CD4-positive, alpha-beta T cell (primary cell): ENCODE measurements at regions of chr3 and their contacts with region 1.

Region 1: DNA sequence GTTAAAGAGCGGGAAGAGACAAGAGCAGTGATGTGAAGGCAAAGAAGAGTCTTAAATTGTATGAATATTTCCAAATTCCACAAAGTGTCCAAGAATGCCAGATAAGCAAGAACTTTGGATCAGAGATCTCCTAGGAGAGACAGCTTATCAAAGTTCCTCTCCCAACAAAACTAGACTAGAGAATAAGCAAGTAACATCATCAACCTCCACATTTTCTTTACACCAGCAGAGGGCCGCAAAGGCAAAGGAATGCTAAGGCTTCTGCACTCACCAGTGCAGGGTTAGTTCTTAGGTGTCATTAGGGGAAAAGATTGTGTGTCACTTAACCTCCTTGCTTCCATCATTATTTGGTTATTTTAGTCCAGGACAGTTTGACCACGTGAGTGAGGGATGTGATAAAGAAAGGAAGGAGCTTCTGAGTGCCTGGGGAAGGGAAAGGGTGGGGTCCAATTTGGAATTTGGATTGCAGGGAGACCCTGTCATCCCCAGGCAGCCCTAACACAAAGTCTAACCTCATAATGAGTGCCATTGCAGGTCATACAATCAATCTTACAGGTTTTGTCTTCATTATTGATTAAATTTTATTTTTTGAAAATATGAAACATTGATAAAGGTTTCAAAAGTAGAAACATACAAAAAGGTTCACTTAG is 7.5 kb upstream of the CMTM6 start:
- DNase-seq: peak; percentile 40 to 81 (median 58)
- ATAC-seq: peak; percentile 92
- H3K4me3 ChIP-seq: no peak overlapping the region
- H3K4me3 Mint-ChIP-seq: no peak overlapping the region
- H3K27ac ChIP-seq: no peak overlapping the region
- H3K27ac Mint-ChIP-seq: no peak overlapping the region
- H3K4me1 ChIP-seq: no peaks in the 10 kb centered on the region
- H3K4me1 Mint-ChIP-seq: no peaks in the 10 kb centered on the region
- H3K27me3 ChIP-seq: no peaks in the 10 kb centered on the region
- H3K27me3 Mint-ChIP-seq: no peaks in the 10 kb centered on the region
- CTCF ChIP-seq: peak; percentile 79

Region 2: DNA sequence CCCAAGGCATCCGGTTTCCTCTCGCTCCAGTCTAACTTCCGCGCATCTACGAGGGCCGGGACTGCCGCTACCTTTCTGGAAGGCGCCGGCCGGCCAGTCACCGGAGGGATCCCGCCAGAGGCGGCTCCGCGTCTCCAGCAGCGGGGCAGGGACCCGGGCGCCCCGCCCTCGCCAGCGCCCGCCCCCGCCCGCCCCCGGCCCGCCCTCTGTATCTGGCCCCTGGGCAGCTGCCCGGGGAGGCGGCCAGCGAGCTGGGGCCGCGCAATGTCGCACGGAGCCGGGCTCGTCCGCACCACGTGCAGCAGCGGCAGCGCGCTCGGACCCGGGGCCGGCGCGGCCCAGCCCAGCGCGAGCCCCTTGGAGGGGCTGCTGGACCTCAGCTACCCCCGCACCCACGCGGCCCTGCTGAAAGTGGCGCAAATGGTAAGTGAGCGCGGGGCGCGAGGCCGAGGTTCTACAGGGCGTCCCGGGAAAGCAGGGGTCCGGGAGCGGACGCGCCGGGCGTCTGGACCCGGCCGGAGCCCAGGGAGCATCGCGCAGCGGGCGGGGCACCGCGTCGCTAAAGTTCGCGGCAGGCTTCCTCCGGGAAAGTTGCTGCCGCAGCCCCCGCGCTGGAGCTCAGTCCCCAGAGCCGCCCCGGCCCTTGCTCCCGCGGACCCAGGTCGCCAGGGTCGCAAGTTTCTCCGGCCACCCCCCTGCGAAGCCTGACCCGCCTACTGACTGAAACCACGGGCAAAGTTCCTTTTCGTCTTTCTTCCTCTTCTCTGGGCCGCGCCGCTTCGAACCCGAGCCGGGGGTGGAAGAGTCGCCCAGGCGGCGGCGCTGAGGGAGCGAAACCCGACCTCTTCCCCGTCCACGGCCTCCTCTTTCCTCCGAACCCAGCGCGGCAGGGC is 118.3 kb before region 1 on chr3 and contains the start of gene CMTM7:
- CTCF ChIA-PET with region 1: no interaction called
- POLR2A ChIA-PET with region 1: no interaction called
- intact Hi-C with region 1: no loop called
- DNase-seq: peak; percentile 32 to 81 (median 52)
- ATAC-seq: peak; percentile 54
- H3K4me3 ChIP-seq: peak within 1 kb of the TSS; percentile 92
- H3K4me3 Mint-ChIP-seq: peak within 1 kb of the TSS; percentile 97
- H3K27ac ChIP-seq: peak within 1 kb of the TSS; percentile 77 to 79
- H3K27ac Mint-ChIP-seq: peak within 1 kb of the TSS; percentile 91
- H3K4me1 ChIP-seq: peaks cover 47% of the 10 kb centered on the region
- H3K4me1 Mint-ChIP-seq: peaks cover 61% of the 10 kb centered on the region
- H3K27me3 ChIP-seq: no peaks in the 10 kb centered on the region
- H3K27me3 Mint-ChIP-seq: no peaks in the 10 kb centered on the region
- CTCF ChIP-seq: no peak
- total RNA-seq, gene CMTM7: 31.5 to 35.2 TPM

Region 3: DNA sequence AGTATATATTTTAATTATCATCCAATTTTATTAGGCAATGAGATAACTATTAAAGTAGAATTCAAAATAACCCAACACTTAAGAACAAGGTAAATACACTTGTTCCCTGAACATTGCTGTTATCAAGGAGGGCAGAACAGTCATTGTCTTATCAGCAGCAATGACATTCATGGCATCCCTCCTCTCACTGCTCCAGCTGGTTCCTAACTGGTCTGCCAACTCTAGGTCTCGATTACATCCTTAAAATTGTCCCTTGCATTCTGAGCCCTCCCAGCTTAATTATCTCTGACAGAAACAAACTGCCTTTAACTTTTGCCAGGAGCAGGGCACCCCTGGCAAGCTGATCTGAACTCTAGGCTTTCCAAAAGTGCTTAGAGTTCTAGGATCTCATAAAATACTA is 74.5 kb after region 1 on chr3:
- CTCF ChIA-PET with region 1: no interaction called
- POLR2A ChIA-PET with region 1: no interaction called
- intact Hi-C with region 1: loop called (anchors 5 to 10 kb)
- DNase-seq: no peak
- ATAC-seq: no peak
- H3K4me3 ChIP-seq: no peak overlapping the region
- H3K4me3 Mint-ChIP-seq: no peak overlapping the region
- H3K27ac ChIP-seq: no peak overlapping the region
- H3K27ac Mint-ChIP-seq: no peak overlapping the region
- H3K4me1 ChIP-seq: no peaks in the 10 kb centered on the region
- H3K4me1 Mint-ChIP-seq: no peaks in the 10 kb centered on the region
- H3K27me3 ChIP-seq: no peaks in the 10 kb centered on the region
- H3K27me3 Mint-ChIP-seq: no peaks in the 10 kb centered on the region
- CTCF ChIP-seq: no peak

Region 4: GRCh38 chr3:32684800-32685542 is 174.8 kb after region 1 on chr3 and contains the start of gene CNOT10:
- CTCF ChIA-PET with region 1: no interaction called
- POLR2A ChIA-PET with region 1: no interaction called
- intact Hi-C with region 1: loop called in 1 of 2 experiments (anchors 5 kb)
- DNase-seq: peak; percentile 91 to 98 (median 94)
- ATAC-seq: peak; percentile 87
- H3K4me3 ChIP-seq: peak within 1 kb of the TSS; percentile 92
- H3K4me3 Mint-ChIP-seq: peak within 1 kb of the TSS; percentile 87
- H3K27ac ChIP-seq: peak within 1 kb of the TSS; percentile 74 to 82
- H3K27ac Mint-ChIP-seq: peak within 1 kb of the TSS; percentile 97
- H3K4me1 ChIP-seq: peaks cover 15% of the 10 kb centered on the region
- H3K4me1 Mint-ChIP-seq: peaks cover 41% of the 10 kb centered on the region
- H3K27me3 ChIP-seq: no peaks in the 10 kb centered on the region
- H3K27me3 Mint-ChIP-seq: no peaks in the 10 kb centered on the region
- CTCF ChIP-seq: no peak
- total RNA-seq, gene CNOT10: 31.3 to 42.0 TPM

Region 5: GRCh38 chr3:32934150-32934742 is 424.0 kb after region 1 on chr3:
- CTCF ChIA-PET with region 1: interaction called, 3 read pairs
- POLR2A ChIA-PET with region 1: no interaction called
- intact Hi-C with region 1: loop called (anchors 1 kb)
- DNase-seq: peak in 4 of 14 experiments; percentile 23 to 51 (median 42)
- ATAC-seq: no peak
- H3K4me3 ChIP-seq: no peak overlapping the region
- H3K4me3 Mint-ChIP-seq: no peak overlapping the region
- H3K27ac ChIP-seq: no peak overlapping the region
- H3K27ac Mint-ChIP-seq: no peak overlapping the region
- H3K4me1 ChIP-seq: no peaks in the 10 kb centered on the region
- H3K4me1 Mint-ChIP-seq: no peaks in the 10 kb centered on the region
- H3K27me3 ChIP-seq: peaks cover 0 to 4% of the 10 kb centered on the region in 2 experiments
- H3K27me3 Mint-ChIP-seq: peaks cover 16% of the 10 kb centered on the region
- CTCF ChIP-seq: peak; percentile 70